Activated CD8-positive, alpha-beta T cell treated with anti-CD3 and anti-CD28 coated beads, Interleukin-2, amount 10 ng/mL, durations not matched to agents 7 days and 5 days (primary cell): ENCODE measurements at regions of chr10 and their contacts with region 1.

Region 1: GRCh38 chr10:88835096-88835909 is 16.3 kb downstream of the ANKRD22 start:
- DNase-seq: peak; percentile 94
- ATAC-seq: peak; percentile 92
- H3K4me3 Mint-ChIP-seq: no peak overlapping the region
- H3K27ac Mint-ChIP-seq: no peak overlapping the region
- H3K4me1 Mint-ChIP-seq: peaks cover 40% of the 10 kb centered on the region
- H3K27me3 Mint-ChIP-seq: no peaks in the 10 kb centered on the region

Region 2: GRCh38 chr10:88687853-88688467 is 147.3 kb before region 1 on chr10:
- CTCF ChIA-PET with region 1: interaction called, 14 read pairs
- POLR2A ChIA-PET with region 1: no interaction called
- DNase-seq: no peak
- ATAC-seq: no peak
- H3K4me3 Mint-ChIP-seq: no peak overlapping the region
- H3K27ac Mint-ChIP-seq: no peak overlapping the region
- H3K4me1 Mint-ChIP-seq: no peaks in the 10 kb centered on the region
- H3K27me3 Mint-ChIP-seq: peaks cover 9% of the 10 kb centered on the region

Region 3: DNA sequence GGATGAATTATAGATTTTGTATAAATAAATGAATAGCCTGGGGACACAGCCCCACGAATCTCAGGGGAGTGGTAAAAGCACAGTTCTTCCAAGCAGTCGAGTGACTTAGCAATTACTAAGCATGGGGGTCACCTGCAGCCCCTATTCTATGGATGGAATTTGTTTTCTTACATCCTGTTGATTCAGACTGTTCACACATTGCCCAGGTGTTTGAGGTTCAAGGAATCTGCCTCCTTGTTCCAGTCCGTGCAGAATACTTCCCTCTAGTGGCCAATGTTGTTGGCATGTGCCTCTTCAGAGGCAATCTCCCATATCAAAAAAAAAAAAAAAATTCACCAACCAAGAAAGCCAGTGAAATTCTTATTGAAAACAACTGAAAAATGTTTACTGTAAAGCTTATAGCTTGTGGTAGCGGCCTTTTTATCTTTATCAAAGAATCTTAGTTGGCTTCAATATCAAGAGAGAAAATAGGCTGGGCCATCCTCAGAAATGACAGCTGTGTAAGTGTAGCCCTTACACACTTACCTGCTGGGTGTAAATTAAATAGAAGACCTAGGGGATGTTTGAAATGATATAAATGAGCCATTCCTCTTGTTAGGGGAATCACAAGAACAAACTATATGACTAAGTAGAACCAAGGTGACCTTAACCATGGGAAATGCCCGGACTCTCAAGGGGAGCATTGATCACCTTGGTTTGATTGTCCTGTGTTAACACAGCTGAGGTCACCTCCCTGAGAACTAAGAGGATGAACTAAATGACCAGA is 24.9 kb before region 1 on chr10:
- CTCF ChIA-PET with region 1: interaction called, 49 read pairs
- POLR2A ChIA-PET with region 1: no interaction called
- DNase-seq: peak; percentile 57
- ATAC-seq: peak; percentile 82
- H3K4me3 Mint-ChIP-seq: no peak overlapping the region
- H3K27ac Mint-ChIP-seq: no peak overlapping the region
- H3K4me1 Mint-ChIP-seq: peaks cover 13% of the 10 kb centered on the region
- H3K27me3 Mint-ChIP-seq: peaks cover 2% of the 10 kb centered on the region

Region 4: DNA sequence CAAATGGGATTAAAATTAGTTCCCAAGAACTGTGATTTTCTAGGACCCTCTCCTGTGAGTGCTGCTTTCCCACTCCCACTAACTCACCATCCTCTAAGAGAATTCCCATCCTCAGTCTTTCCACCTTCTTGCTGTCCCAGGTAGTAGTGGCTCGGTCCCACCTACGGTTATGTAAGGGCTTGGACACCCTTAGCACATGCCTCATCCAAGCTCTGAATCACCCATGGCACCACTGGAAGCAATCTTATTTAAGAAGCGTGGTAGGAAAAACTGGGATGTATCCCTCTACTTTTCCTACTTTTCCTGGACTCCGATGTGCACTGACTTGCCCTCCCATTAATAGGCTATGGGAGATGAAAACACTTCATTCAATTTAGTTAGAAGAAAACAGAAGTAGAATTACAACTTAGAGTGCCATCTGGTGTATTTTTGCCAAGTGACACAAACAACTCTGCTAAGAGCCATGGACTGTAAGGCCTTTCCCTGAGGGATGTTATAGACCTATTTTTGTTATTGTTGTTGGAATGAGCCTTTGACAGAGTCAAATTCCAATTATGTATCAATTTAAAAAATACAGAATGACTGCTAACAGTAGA is 30.1 kb after region 1 on chr10:
- CTCF ChIA-PET with region 1: interaction called, 54 read pairs
- POLR2A ChIA-PET with region 1: interaction called, 3 read pairs
- DNase-seq: no peak
- ATAC-seq: no peak
- H3K4me3 Mint-ChIP-seq: no peak overlapping the region
- H3K27ac Mint-ChIP-seq: no peak overlapping the region
- H3K4me1 Mint-ChIP-seq: peaks cover 2% of the 10 kb centered on the region
- H3K27me3 Mint-ChIP-seq: peaks cover 3% of the 10 kb centered on the region

Region 5: DNA sequence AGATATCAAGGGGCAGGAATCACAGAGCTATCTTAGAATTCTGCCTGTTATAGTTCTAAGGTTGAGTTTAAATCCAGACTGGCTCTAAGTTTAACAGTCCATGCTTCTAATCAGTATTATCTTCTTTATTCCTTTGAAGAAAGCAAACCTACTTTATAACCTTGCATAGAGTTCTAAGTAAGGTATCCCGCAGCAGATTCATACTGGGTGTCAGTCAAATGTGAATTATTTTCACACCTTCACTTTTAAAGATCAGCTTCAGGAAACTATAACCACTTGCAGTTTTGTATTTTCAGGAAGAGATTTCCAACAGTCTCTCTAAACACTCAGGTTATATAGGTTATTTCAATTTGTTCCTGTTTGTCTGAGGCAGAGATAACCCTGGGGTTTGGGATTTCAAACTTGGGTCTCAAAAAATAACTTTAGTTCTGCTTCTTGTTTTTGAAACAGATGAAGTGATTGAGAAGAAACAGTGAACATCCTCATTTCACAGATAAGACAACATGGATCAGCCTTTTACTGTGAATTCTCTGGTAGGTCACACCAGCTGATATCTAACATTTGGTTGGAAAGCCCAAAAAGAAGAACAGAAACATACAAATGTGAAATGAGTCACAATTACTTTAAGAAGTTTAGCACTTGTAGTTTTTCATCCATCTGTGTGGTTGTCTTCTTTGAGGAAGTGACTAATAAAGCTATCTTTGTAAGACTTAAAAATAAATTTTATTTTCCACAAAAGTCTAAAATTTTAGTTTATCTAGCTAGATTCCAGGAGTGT is 66.1 kb after region 1 on chr10:
- CTCF ChIA-PET with region 1: interaction called, 39 read pairs
- POLR2A ChIA-PET with region 1: no interaction called
- DNase-seq: no peak
- ATAC-seq: peak; percentile 40
- H3K4me3 Mint-ChIP-seq: no peak overlapping the region
- H3K27ac Mint-ChIP-seq: peak overlapping the region; percentile 53
- H3K4me1 Mint-ChIP-seq: peaks cover 49% of the 10 kb centered on the region
- H3K27me3 Mint-ChIP-seq: no peaks in the 10 kb centered on the region

Region 6: GRCh38 chr10:88990384-88991160 is 155.3 kb after region 1 on chr10 and contains the start of gene FAS:
- CTCF ChIA-PET with region 1: interaction called, 34 read pairs
- POLR2A ChIA-PET with region 1: interaction called, 7 read pairs
- DNase-seq: peak; percentile 88
- ATAC-seq: peak; percentile 80
- H3K4me3 Mint-ChIP-seq: peak within 1 kb of the TSS; percentile 95
- H3K27ac Mint-ChIP-seq: peak within 1 kb of the TSS; percentile 95
- H3K4me1 Mint-ChIP-seq: peaks cover 71% of the 10 kb centered on the region
- H3K27me3 Mint-ChIP-seq: no peaks in the 10 kb centered on the region
- total RNA-seq, gene FAS: 58.5 to 62.6 TPM